CD14-positive monocyte (primary cell): ENCODE measurements at regions of chr2 and their contacts with region 1.

Region 1: GRCh38 chr2:11154923-11155380 is 315 bp upstream of the SLC66A3 start:
- DNase-seq: peak; percentile 97
- H3K4me3 ChIP-seq: peak overlapping the region; percentile 55 to 90 (median 78)
- H3K4me3 Mint-ChIP-seq: peak overlapping the region; percentile 85 to 89
- H3K27ac ChIP-seq: peak overlapping the region; percentile 92 to 97
- H3K27ac Mint-ChIP-seq: peak overlapping the region; percentile 86 to 95 (median 91)
- H3K4me1 ChIP-seq: peaks cover 23 to 30% of the 10 kb centered on the region in 2 donors
- H3K4me1 Mint-ChIP-seq: peaks cover 28% of the 10 kb centered on the region
- H3K27me3 ChIP-seq: no peaks in the 10 kb centered on the region
- H3K27me3 Mint-ChIP-seq: peaks cover 2 to 4% (median 2%) of the 10 kb centered on the region in 3 donors
- CTCF ChIP-seq: no peak

Region 2: DNA sequence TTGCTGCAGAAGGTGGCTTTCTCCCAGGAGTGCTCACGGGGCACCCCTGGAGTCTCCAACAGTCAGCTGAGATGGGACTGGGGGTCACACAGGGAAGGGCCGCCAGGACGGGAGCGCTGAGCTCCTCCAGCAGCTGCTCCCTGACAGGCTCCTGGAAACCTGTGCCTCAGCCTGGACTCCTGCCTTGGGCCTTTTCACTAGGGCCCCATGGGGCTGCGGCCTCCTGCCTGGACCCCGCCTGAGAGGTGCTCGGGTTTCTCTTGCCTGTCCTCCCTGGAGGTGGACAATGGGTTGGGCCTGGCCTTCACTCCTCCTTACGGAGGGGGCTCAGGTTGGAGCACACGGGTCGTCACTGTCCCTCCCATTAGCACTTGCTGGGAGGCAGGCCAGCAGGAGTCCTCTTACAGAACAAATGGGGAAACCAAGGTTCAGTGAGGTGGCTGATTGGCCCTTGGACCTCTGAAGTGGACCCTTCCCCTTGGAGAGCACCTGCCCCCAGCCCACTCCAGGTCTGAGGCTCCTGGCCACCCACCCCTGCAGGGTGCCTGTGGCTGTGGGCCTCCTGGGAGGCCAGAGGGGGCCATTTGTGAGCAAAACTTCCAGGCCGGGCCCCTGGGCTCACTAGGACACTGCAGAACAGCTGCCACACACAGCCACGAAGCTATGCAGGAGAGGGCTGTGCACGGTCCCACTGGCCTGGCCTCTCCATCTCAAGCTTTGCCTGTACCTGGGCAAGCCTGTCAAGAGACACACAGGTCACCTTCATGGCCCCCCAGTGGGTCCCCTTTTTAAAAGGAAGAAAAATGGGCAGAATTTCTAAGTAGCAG is 649.7 kb before region 1 on chr2:
- intact Hi-C with region 1: no loop called
- DNase-seq: no peak
- H3K4me3 ChIP-seq: no peak overlapping the region
- H3K4me3 Mint-ChIP-seq: no peak overlapping the region
- H3K27ac ChIP-seq: no peak overlapping the region
- H3K27ac Mint-ChIP-seq: no peak overlapping the region
- H3K4me1 ChIP-seq: no peaks in the 10 kb centered on the region
- H3K4me1 Mint-ChIP-seq: no peaks in the 10 kb centered on the region
- H3K27me3 ChIP-seq: no peaks in the 10 kb centered on the region
- H3K27me3 Mint-ChIP-seq: peaks cover 8 to 15% (median 14%) of the 10 kb centered on the region in 3 donors
- CTCF ChIP-seq: no peak

Region 3: GRCh38 chr2:11187083-11187619 is 32.2 kb after region 1 on chr2:
- intact Hi-C with region 1: loop called in 1 of 2 experiments (anchors 5 kb)
- DNase-seq: peak; percentile 45 to 74 (median 63)
- H3K4me3 ChIP-seq: peak overlapping the region in 1 of 3 experiments; percentile 28
- H3K4me3 Mint-ChIP-seq: no peak overlapping the region
- H3K27ac ChIP-seq: peak overlapping the region in 1 of 2 donors; percentile 66
- H3K27ac Mint-ChIP-seq: peak overlapping the region in 6 of 7 donors; percentile 4 to 88 (median 74)
- H3K4me1 ChIP-seq: peaks cover 8 to 9% of the 10 kb centered on the region in 2 donors
- H3K4me1 Mint-ChIP-seq: peaks cover 13% of the 10 kb centered on the region
- H3K27me3 ChIP-seq: no peaks in the 10 kb centered on the region
- H3K27me3 Mint-ChIP-seq: peaks cover 0 to 1% (median 0%) of the 10 kb centered on the region in 3 donors
- CTCF ChIP-seq: no peak

Region 4: GRCh38 chr2:11203480-11203879 is 48.5 kb after region 1 on chr2:
- intact Hi-C with region 1: loop called in 1 of 2 experiments (anchors 10 kb)
- DNase-seq: peak; percentile 75 to 90 (median 90)
- H3K4me3 ChIP-seq: peak overlapping the region in 1 of 3 experiments; percentile 42
- H3K4me3 Mint-ChIP-seq: peak overlapping the region in 1 of 2 donors; percentile 19
- H3K27ac ChIP-seq: peak overlapping the region in 1 of 2 donors; percentile 77
- H3K27ac Mint-ChIP-seq: peak overlapping the region; percentile 81 to 94 (median 90)
- H3K4me1 ChIP-seq: peaks cover 24 to 25% of the 10 kb centered on the region in 2 donors
- H3K4me1 Mint-ChIP-seq: peaks cover 28% of the 10 kb centered on the region
- H3K27me3 ChIP-seq: no peaks in the 10 kb centered on the region
- H3K27me3 Mint-ChIP-seq: no peaks in the 10 kb centered on the region
- CTCF ChIP-seq: no peak

Region 5: GRCh38 chr2:11344342-11344955 is 189.5 kb after region 1 on chr2 and contains the start of gene ROCK2:
- intact Hi-C with region 1: loop called (anchors 5 to 10 kb)
- DNase-seq: peak; percentile 48 to 60 (median 58)
- H3K4me3 ChIP-seq: peak within 1 kb of the TSS; percentile 87 to 97 (median 89)
- H3K4me3 Mint-ChIP-seq: peak within 1 kb of the TSS; percentile 98 to 99
- H3K27ac ChIP-seq: peak within 1 kb of the TSS; percentile 59 to 80
- H3K27ac Mint-ChIP-seq: peak within 1 kb of the TSS; percentile 77 to 95 (median 88)
- H3K4me1 ChIP-seq: peaks cover 23% of the 10 kb centered on the region in 2 donors
- H3K4me1 Mint-ChIP-seq: peaks cover 32% of the 10 kb centered on the region
- H3K27me3 ChIP-seq: no peaks in the 10 kb centered on the region
- H3K27me3 Mint-ChIP-seq: peaks cover 0 to 2% (median 0%) of the 10 kb centered on the region in 3 donors
- CTCF ChIP-seq: no peak
- polyA plus RNA-seq, gene ROCK2: 2.8 to 10.2 (median 4.3) TPM

Region 6: GRCh38 chr2:11465497-11466406 is 310.8 kb after region 1 on chr2 and contains the start of gene E2F6:
- intact Hi-C with region 1: loop called in 1 of 2 experiments (anchors 10 kb)
- DNase-seq: peak; percentile 72 to 76 (median 73)
- H3K4me3 ChIP-seq: peak within 1 kb of the TSS; percentile 44 to 82 (median 77)
- H3K4me3 Mint-ChIP-seq: peak within 1 kb of the TSS; percentile 93 to 95
- H3K27ac ChIP-seq: peak within 1 kb of the TSS; percentile 61 to 84
- H3K27ac Mint-ChIP-seq: peak within 1 kb of the TSS; percentile 88 to 94 (median 92)
- H3K4me1 ChIP-seq: peaks cover 14 to 17% of the 10 kb centered on the region in 2 donors
- H3K4me1 Mint-ChIP-seq: peaks cover 27% of the 10 kb centered on the region
- H3K27me3 ChIP-seq: no peaks in the 10 kb centered on the region
- H3K27me3 Mint-ChIP-seq: peaks cover 1 to 2% (median 1%) of the 10 kb centered on the region in 3 donors
- CTCF ChIP-seq: no peak
- polyA plus RNA-seq, gene E2F6: 3.5 to 6.4 (median 3.7) TPM